ENCODE measurements at regions of chr3 and their contacts with region 1.

Region 1: DNA sequence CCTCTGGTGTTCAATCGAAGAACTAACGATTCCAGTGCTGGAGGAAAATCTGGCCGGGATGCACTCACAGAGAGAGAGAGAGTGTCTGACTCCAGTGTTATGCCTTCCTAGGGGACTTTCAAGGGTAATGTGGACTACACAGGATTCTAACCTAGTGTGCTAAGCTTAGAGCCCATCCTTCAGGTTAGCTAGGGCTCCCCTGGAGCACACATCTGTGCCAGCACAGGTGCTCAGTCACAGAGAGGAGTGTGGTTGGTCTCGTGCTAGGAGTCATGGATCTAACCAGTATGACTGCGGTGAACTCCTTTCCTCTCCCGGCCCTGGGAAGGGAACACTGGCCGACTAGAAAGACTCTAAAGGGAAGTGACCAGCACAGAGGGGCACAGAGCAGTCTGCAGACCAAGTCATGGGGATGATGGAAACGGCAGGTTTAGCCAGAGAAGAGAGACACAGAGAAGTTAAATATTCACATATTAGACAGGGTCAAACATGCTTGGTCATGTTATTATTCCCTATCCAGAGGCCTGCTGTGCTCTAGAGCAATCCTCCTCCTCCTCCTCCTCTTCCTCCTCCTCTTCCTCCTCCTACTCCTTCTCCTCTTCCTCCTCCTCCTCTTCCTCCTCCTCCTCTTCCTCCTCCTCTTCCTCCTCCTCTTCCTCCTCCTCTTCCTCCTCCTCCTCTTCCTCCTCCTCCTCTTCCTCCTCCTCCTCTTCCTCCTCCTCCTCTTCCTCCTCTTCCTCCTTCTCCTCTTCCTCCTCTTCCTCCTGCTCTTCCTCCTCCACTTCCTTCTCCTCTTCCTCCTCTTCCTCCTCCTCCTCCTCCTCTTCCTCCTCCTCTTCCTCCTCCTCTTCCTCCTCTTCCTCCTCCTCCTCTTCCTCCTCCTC is 280.3 kb downstream of the XXYLT1 start:
- DNase-seq: no peak
- H3K4me3 ChIP-seq: no peak overlapping the region
- H3K27ac ChIP-seq: no peak overlapping the region
- H3K4me1 ChIP-seq: peaks cover 0 to 13% (median under 1%) of the 10 kb centered on the region in 6 donors
- H3K27me3 ChIP-seq: no peaks in the 10 kb centered on the region
- CTCF ChIP-seq: no peak
- POLR2A ChIP-seq: no peak

Region 2: GRCh38 chr3:194808640-194809097 is 182.0 kb before region 1 on chr3:
- intact Hi-C with region 1: no loop called
- DNase-seq: no peak
- H3K4me3 ChIP-seq: no peak overlapping the region
- H3K27ac ChIP-seq: no peak overlapping the region
- H3K4me1 ChIP-seq: no peaks in the 10 kb centered on the region
- H3K27me3 ChIP-seq: no peaks in the 10 kb centered on the region
- CTCF ChIP-seq: no peak
- POLR2A ChIP-seq: no peak

Region 3: GRCh38 chr3:195259475-195260279 is 269.0 kb after region 1 on chr3:
- intact Hi-C with region 1: loop called (anchors 10 kb)
- DNase-seq: peak; percentile 97
- H3K4me3 ChIP-seq: peak overlapping the region; percentile 54 to 88 (median 60)
- H3K27ac ChIP-seq: peak overlapping the region; percentile 83 to 96 (median 93)
- H3K4me1 ChIP-seq: peaks cover 11 to 62% (median 33%) of the 10 kb centered on the region in 6 donors
- H3K27me3 ChIP-seq: no peaks in the 10 kb centered on the region
- CTCF ChIP-seq: peak in 7 of 11 experiments; percentile 56 to 97 (median 85)
- POLR2A ChIP-seq: peak in 1 of 3 donors; percentile 18

Region 4: DNA sequence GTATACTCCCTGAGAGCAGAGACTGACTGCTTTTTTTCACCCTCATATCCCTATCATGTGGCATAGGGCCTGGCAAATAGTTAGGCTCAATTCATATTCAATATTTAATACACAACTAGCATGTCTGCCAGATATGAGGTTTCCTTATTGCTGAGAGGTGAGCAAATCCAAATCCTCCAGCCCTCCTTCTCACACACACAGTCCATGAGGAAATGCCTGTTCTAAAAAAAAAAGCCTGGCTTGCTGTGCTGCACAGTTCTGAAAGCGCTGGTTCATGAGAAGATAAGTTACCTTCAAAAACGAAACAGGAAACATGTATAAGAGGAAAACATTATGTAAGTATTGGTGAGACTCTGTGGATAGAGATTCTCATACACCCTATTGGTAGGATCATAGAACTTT is 467.6 kb after region 1 on chr3:
- intact Hi-C with region 1: no loop called
- DNase-seq: no peak
- H3K4me3 ChIP-seq: no peak overlapping the region
- H3K27ac ChIP-seq: peak overlapping the region in 5 of 8 donors; percentile 42 to 64 (median 47)
- H3K4me1 ChIP-seq: peaks cover 5 to 20% (median 15%) of the 10 kb centered on the region in 6 donors
- H3K27me3 ChIP-seq: no peaks in the 10 kb centered on the region
- CTCF ChIP-seq: peak in 2 of 11 experiments; percentile 20 to 21
- POLR2A ChIP-seq: no peak